ENCODE measurements at regions of chr5 and their contacts with region 1.

Region 1: GRCh38 chr5:137945825-137946224 is 56.6 kb downstream of the PKD2L2 start:
- DNase-seq: no peak
- ATAC-seq: no peak
- H3K4me3 ChIP-seq: no peak overlapping the region
- H3K27ac ChIP-seq: no peak overlapping the region
- H3K4me1 ChIP-seq: no peaks in the 10 kb centered on the region
- H3K27me3 ChIP-seq: no peaks in the 10 kb centered on the region
- CTCF ChIP-seq: no peak
- POLR2A ChIP-seq: no peak
- RAD21 ChIP-seq: no peak

Region 2: GRCh38 chr5:138018844-138019243 is 73.0 kb after region 1 on chr5:
- CTCF ChIA-PET with region 1: no interaction called
- POLR2A ChIA-PET with region 1: no interaction called
- dilution Hi-C with region 1: no loop called
- in situ Hi-C with region 1: no loop called
- intact Hi-C with region 1: loop called (anchors 5 kb)
- DNase-seq: peak; percentile 45
- ATAC-seq: peak; percentile 71
- H3K4me3 ChIP-seq: no peak overlapping the region
- H3K27ac ChIP-seq: no peak overlapping the region
- H3K4me1 ChIP-seq: peaks cover 6% of the 10 kb centered on the region
- H3K27me3 ChIP-seq: no peaks in the 10 kb centered on the region
- CTCF ChIP-seq: no peak
- POLR2A ChIP-seq: no peak
- RAD21 ChIP-seq: no peak

Measured in IMR-90 (cell line).